PC-3 (cell line): ENCODE measurements at regions of chr4 and their contacts with region 1.

Region 1: DNA sequence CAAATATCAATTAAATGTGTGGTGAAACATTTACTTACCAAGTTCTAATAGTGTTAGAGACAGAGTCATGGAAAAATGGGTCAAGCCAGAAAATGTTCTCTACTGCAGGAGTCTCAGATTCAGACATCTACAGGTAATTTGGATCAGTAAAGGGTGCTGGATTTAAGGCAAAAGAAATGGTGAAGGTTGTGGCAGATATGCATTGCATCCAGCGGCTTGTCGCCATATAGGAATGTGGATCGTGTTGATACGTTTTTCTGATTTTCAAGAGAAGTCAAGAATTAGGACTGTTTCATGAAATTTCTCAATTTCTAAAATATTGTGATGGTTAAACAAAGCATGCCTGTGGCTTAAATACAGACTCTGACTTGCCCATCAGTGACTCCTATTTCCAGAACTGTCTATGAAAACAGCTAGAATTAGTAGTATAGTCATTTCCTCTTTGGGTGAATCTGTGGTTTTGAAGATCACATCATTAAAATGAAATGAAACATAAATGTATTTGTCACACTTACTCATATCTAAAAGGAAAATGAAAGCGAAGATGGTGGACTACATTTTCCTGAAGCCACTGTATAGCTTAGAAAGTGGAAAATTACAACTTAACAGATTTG is 110.1 kb upstream of the VEGFC start:
- DNase-seq: peak; percentile 80
- ATAC-seq: peak; percentile 69
- H3K4me3 ChIP-seq: peak overlapping the region; percentile 9; the same call in 1 of the 2 replicates
- H3K27ac ChIP-seq: peak overlapping the region; percentile 94
- H3K4me1 ChIP-seq: peaks cover 41% of the 10 kb centered on the region
- H3K27me3 ChIP-seq: no peaks in the 10 kb centered on the region
- CTCF ChIP-seq: no peak

Region 2: GRCh38 chr4:176563591-176563990 is 339.2 kb before region 1 on chr4:
- CTCF ChIA-PET with region 1: interaction called, 11 read pairs
- POLR2A ChIA-PET with region 1: no interaction called
- intact Hi-C with region 1: no loop called
- DNase-seq: peak; percentile 54
- ATAC-seq: peak; percentile 53
- H3K4me3 ChIP-seq: no peak overlapping the region
- H3K27ac ChIP-seq: no peak overlapping the region
- H3K4me1 ChIP-seq: peaks cover 14% of the 10 kb centered on the region
- H3K27me3 ChIP-seq: no peaks in the 10 kb centered on the region
- CTCF ChIP-seq: peak; percentile 46

Region 3: DNA sequence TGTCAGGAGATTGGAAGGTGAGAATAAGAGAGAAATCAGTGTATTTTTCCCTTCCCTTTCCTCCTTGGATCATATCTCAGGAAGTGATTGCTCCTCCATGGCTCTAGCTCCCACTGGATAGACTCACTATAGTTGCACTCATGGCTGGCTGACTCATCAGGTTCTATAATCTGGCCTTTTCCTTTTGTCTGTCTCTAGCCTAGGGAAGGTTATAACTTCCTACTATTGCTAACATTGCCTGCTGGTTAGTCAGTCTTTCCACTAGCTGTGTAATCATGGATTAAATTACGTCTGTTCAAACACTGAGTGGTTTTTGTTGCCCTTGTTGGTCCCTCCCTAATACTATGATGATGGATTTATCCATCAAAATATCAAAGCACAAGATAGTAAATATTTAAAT is 85.4 kb after region 1 on chr4:
- CTCF ChIA-PET with region 1: no interaction called
- POLR2A ChIA-PET with region 1: no interaction called
- intact Hi-C with region 1: loop called (anchors 1 kb)
- DNase-seq: peak; percentile 96
- ATAC-seq: peak; percentile 100
- H3K4me3 ChIP-seq: no peak overlapping the region
- H3K27ac ChIP-seq: peak overlapping the region; percentile 97
- H3K4me1 ChIP-seq: peaks cover 19% of the 10 kb centered on the region
- H3K27me3 ChIP-seq: no peaks in the 10 kb centered on the region
- CTCF ChIP-seq: no peak

Region 4: GRCh38 chr4:177047070-177047850 is 144.4 kb after region 1 on chr4:
- CTCF ChIA-PET with region 1: interaction called, 4 read pairs
- POLR2A ChIA-PET with region 1: no interaction called
- intact Hi-C with region 1: loop called (anchors 1 kb)
- DNase-seq: peak; percentile 78
- ATAC-seq: peak; percentile 96
- H3K4me3 ChIP-seq: no peak overlapping the region
- H3K27ac ChIP-seq: peak overlapping the region; percentile 76
- H3K4me1 ChIP-seq: peaks cover 13% of the 10 kb centered on the region
- H3K27me3 ChIP-seq: no peaks in the 10 kb centered on the region
- CTCF ChIP-seq: peak; percentile 84